WTC11 (cell line): ENCODE measurements at regions of chr1 and their contacts with region 1.

Region 1: GRCh38 chr1:195886000-195886399 is 722.2 kb downstream of the KCNT2 start:
- DNase-seq: no peak
- ATAC-seq: peak; percentile 73
- H3K4me3 Mint-ChIP-seq: no peak overlapping the region
- H3K27ac Mint-ChIP-seq: no peak overlapping the region
- H3K4me1 Mint-ChIP-seq: peaks cover 14% of the 10 kb centered on the region
- H3K27me3 Mint-ChIP-seq: no peaks in the 10 kb centered on the region
- CTCF ChIP-seq: peak; percentile 48

Region 2: DNA sequence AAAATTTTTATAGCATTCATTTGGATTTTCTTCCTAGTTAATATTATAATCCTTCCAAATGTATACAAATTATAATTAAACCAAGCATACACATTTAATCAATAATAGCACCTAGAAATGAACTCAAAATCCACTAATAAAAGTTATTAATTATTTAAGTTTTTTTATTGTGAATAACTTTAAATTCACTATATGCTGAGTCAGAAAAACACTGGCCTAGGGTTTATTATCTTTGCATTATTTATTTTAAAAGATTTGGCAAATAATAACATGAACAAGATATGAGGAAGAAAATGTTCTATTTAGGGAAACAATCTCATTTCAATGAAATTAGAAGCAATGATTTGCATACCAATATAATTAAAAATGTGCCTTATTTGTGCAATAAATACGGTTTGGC is 229.2 kb before region 1 on chr1:
- CTCF ChIA-PET with region 1: interaction called, 10 read pairs
- POLR2A ChIA-PET with region 1: no interaction called
- DNase-seq: no peak
- ATAC-seq: no peak
- H3K4me3 Mint-ChIP-seq: no peak overlapping the region
- H3K27ac Mint-ChIP-seq: no peak overlapping the region
- H3K4me1 Mint-ChIP-seq: no peaks in the 10 kb centered on the region
- H3K27me3 Mint-ChIP-seq: no peaks in the 10 kb centered on the region
- CTCF ChIP-seq: no peak

Region 3: GRCh38 chr1:195866091-195866780 is 19.8 kb before region 1 on chr1:
- CTCF ChIA-PET with region 1: interaction called, 25 read pairs
- POLR2A ChIA-PET with region 1: no interaction called
- DNase-seq: no peak
- ATAC-seq: no peak
- H3K4me3 Mint-ChIP-seq: no peak overlapping the region
- H3K27ac Mint-ChIP-seq: peak overlapping the region; percentile 54
- H3K4me1 Mint-ChIP-seq: peaks cover 24% of the 10 kb centered on the region
- H3K27me3 Mint-ChIP-seq: no peaks in the 10 kb centered on the region
- CTCF ChIP-seq: no peak

Region 4: GRCh38 chr1:195908121-195908520 is 22.1 kb after region 1 on chr1:
- CTCF ChIA-PET with region 1: interaction called, 10 read pairs
- POLR2A ChIA-PET with region 1: interaction called, 3 read pairs
- DNase-seq: no peak
- ATAC-seq: no peak
- H3K4me3 Mint-ChIP-seq: no peak overlapping the region
- H3K27ac Mint-ChIP-seq: no peak overlapping the region
- H3K4me1 Mint-ChIP-seq: no peaks in the 10 kb centered on the region
- H3K27me3 Mint-ChIP-seq: no peaks in the 10 kb centered on the region
- CTCF ChIP-seq: no peak

Region 5: GRCh38 chr1:195958131-195958530 is 72.1 kb after region 1 on chr1:
- CTCF ChIA-PET with region 1: no interaction called
- POLR2A ChIA-PET with region 1: no interaction called
- DNase-seq: no peak
- ATAC-seq: no peak
- H3K4me3 Mint-ChIP-seq: no peak overlapping the region
- H3K27ac Mint-ChIP-seq: peak overlapping the region; percentile 23; the same call in 1 of the 2 replicates
- H3K4me1 Mint-ChIP-seq: peaks cover 15% of the 10 kb centered on the region
- H3K27me3 Mint-ChIP-seq: no peaks in the 10 kb centered on the region
- CTCF ChIP-seq: no peak